Ovary (tissue), 10 donors: ENCODE measurements at regions of chr15 and their contacts with region 1.

Region 1: GRCh38 chr15:66251790-66252684 is 1.5 kb downstream of the MEGF11 start:
- DNase-seq: peak; percentile 25 to 75 (median 53)
- H3K4me3 ChIP-seq: peak overlapping the region; percentile 48
- H3K27ac ChIP-seq: no peak overlapping the region
- H3K4me1 ChIP-seq: peaks cover 5% of the 10 kb centered on the region
- H3K27me3 ChIP-seq: no peaks in the 10 kb centered on the region
- CTCF ChIP-seq: peak; percentile 28 to 41 (median 36)
- EP300 ChIP-seq: no peak
- POLR2A ChIP-seq: no peak

Region 2: DNA sequence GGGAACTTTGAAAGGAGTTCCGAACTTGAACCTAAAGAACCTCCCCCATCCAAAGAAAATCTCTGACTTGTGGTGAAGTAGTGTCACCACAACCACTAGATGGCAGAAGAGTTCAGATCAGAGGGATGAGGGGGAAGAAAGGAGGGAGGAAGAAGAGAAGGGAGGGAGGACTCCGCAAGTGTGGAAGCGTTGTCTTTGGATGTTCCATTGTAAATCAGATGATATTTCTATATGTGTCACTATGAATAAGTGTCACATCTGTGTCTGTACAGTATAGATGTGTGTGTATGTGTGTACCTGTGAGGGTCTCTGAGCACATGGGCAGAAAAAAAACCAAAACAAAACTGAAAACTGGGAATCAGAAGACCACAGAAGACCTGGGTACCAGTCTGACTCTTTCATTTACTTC is 613.4 kb before region 1 on chr15:
- intact Hi-C with region 1: loop called in 1 of 4 experiments (anchors 5 kb)
- DNase-seq: peak in 2 of 5 donors; percentile 16 to 42
- H3K4me3 ChIP-seq: no peak overlapping the region
- H3K27ac ChIP-seq: no peak overlapping the region
- H3K4me1 ChIP-seq: no peaks in the 10 kb centered on the region
- H3K27me3 ChIP-seq: no peaks in the 10 kb centered on the region
- CTCF ChIP-seq: peak; percentile 70 to 77 (median 72)
- EP300 ChIP-seq: no peak
- POLR2A ChIP-seq: no peak

Region 3: DNA sequence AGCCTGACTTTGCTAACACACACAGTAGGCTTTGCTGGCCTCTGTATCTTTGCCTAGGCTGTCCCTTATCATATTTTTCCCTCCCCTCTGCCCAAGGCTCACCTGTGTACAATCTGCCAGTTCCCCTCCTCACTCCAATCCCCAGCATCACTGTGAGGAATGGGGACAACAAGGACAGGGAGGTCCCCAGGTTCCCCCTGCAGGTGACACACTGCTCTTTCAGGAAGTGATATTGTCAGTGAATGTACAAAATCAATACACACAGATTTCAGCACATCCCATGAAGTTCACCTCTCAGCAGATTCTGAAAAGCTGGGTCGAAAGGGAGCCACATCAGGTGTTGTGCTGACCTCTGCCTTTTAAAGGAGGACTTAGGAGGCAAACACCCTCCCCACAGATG is 205.3 kb before region 1 on chr15:
- intact Hi-C with region 1: no loop called
- DNase-seq: no peak
- H3K4me3 ChIP-seq: no peak overlapping the region
- H3K27ac ChIP-seq: no peak overlapping the region
- H3K4me1 ChIP-seq: no peaks in the 10 kb centered on the region
- H3K27me3 ChIP-seq: no peaks in the 10 kb centered on the region
- CTCF ChIP-seq: no peak
- EP300 ChIP-seq: no peak
- POLR2A ChIP-seq: no peak